Posterior cingulate gyrus (tissue), 11 donors: ENCODE measurements at regions of chr9 and their contacts with region 1.

Region 1: DNA sequence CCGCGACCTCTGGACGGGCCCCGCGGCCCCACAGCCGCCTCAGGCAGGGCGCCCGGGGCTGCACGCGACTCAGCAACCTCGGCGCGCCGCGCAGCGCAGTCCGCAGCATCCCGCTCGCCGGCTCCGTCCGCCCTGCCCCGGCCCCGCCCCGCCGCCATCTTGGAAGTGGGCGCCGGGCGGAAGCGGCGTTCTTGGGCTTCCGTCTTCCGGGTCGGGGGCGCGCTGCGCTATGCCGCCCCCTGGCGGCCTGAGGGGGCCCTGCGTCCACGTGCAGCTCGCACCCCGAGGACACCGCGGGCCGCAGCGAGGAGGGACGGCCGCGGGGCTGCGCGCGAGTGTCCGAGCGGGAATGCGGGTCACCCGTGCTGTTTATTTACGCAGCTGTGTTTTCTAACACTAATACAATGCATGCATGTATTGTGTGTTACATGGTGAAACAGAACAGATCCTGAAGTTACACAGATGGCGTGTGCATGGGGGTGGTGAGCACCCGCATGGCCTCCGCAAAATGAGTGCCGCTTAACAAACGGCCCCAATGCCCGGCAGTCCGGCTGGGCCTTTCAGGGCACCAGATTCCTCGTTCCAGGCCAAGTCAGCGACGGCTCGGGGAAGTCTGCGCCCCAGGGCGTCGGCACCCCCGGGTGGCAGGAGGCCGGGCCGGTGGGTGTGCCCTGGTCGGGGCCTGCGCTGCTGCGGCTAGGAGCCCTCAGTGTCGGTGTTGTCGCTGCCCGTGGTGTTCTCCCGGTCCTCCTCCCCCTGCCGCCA is at the start of gene DNLZ:
- DNase-seq: peak in 9 of 10 donors; percentile 59 to 97 (median 76)

Region 2: GRCh38 chr9:136312436-136312835 is 51.4 kb before region 1 on chr9:
- intact Hi-C with region 1: loop called (anchors 5 kb)
- DNase-seq: peak in 8 of 10 donors; percentile 42 to 94 (median 68)

Region 3: DNA sequence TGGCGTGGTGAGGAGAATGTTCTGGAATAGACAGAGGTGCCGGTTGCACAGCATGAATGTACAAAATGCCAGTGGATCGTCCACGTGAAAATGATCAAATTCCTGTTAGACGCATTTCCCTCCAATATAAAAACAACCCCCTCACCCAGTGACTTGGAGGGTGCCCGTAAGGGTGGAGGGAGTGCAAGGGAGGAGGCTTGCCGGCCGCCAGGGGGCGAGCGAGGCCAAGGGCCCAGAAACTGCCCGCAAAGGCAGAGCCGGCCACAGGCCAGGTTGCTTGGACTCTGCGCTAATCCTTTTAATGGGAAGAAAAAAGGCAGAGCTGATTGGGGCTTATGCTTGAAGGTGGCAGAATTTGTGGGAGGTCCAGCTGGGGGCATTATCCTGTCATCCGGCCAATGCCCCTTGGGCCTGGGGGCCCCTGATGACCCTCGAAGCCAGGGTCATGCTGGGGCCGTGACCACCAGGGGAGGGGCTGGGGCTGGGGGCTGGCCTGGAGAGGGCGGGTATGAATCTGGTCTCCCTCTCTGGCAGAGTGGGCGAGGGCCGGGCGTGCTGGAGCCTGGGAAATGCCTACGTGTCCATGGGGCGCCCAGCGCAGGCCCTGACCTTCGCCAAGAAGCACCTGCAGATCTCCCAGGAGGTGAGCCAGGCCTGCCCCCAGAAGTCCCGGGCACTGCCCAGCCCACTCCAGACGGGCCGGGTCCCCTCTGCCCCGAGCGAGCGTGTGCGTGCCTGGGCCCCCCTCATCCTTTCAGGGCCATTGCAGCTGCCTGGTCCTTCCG is 24.4 kb before region 1 on chr9:
- intact Hi-C with region 1: loop called (anchors 1 kb)
- DNase-seq: peak in 9 of 10 donors; percentile 40 to 95 (median 66)